ENCODE measurements at regions of chr3 and their contacts with region 1.

Region 1: DNA sequence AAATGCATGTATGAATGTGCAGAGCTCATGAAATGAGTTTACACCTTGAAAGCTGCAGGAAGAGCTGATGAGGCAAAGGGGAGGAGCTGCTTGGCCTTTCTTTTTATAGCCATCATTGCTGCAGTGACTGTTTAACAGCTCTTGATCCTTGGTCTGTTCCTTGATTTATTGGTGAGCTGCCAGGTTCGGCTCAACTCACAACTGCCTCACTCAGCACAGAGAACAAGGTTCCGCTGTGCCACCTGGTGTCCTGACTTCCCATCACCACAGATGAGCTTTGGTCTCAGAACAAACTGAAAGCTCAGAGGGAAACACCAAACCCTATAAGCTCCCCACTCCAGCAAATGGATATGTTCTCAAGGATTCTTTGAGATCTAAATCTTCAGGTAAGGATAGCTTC is 626.1 kb downstream of the MAGI1 start:
- DNase-seq: peak; percentile 71 to 93 (median 78)
- ATAC-seq: peak; percentile 99
- H3K4me3 ChIP-seq: no peak overlapping the region
- H3K4me1 ChIP-seq: peaks cover 10% of the 10 kb centered on the region
- CTCF ChIP-seq: peak; percentile 23

Region 2: GRCh38 chr3:65342084-65342683 is 70.4 kb before region 1 on chr3:
- intact Hi-C with region 1: loop called in 1 of 2 experiments (anchors 10 kb)
- DNase-seq: peak; percentile 54 to 80 (median 75)
- ATAC-seq: peak; percentile 91
- H3K4me3 ChIP-seq: no peak overlapping the region
- H3K4me1 ChIP-seq: no peaks in the 10 kb centered on the region
- CTCF ChIP-seq: peak; percentile 38